ENCODE measurements at regions of chr10 and their contacts with region 1.

Region 1: DNA sequence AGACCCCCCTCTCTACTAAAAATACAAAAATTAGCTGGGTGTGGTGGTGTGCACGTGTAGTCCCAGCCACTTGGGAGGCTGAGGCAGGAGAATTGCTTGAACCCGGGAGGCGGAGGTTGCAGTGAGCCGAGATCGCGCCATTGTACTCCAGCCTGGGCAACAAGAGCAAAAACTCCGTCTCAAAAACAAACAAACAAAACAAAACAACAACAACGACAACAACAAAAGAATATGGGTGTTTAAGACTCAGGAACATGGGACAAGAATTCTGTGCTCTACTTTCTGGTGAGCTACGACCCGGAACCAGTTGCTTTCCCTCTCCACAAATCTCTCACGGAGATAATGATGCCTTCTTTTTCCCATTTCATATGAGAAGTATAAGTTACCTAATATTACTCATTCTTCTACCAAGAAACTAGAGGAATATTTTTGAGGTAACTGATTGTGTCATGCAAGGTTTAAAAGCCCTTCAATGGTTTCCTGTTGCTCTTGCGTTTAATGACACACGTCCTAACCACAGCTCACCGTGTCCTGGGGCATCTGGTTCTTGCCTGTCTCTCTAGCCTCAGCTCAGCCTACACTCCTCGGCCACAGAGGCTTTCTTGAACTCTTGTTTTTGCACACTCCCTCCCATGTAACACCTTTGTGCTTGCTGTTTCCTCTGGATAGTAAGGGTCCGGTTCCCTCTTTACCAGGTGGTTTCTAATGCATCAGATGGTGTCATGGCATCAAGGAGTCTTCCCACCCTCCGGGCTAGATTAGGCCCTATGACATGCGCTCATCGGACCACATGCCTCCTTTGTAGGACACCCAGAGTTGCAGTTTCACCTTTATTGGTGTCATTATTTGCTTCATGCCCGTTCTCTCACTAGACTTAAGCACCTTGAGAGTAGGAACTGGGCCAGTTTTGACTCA is 67.5 kb downstream of the PFKFB3 start:
- DNase-seq: peak; percentile 73
- H3K4me3 Mint-ChIP-seq: peak overlapping the region; percentile 22
- H3K27ac Mint-ChIP-seq: peak overlapping the region; percentile 89
- H3K4me1 Mint-ChIP-seq: peaks cover 58% of the 10 kb centered on the region
- H3K27me3 Mint-ChIP-seq: no peaks in the 10 kb centered on the region

Region 2: DNA sequence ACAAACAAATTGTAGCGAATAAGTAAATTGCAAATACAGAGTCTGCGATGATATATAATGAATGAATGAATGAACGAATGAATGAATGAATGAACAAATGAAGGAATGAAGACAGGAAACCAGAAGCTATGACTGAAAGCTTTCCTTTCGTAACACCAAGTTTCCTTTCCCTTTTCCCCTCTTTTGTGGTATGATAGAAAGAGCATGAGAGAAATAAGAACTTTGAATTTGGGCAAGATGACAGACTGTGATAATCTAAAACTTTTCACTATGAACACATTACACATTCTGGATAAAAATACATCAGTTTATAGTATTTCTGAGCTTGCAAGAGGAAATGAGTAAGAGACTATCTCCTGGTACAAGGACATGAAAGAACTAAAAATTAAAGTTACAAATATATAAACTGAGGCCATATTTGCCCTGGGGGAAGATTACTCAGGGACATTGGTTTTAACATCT is 913.9 kb before region 1 on chr10:
- intact Hi-C with region 1: no loop called
- DNase-seq: no peak
- H3K4me3 Mint-ChIP-seq: no peak overlapping the region
- H3K27ac Mint-ChIP-seq: no peak overlapping the region
- H3K4me1 Mint-ChIP-seq: peaks cover 9% of the 10 kb centered on the region
- H3K27me3 Mint-ChIP-seq: peaks cover 4% of the 10 kb centered on the region

Region 3: DNA sequence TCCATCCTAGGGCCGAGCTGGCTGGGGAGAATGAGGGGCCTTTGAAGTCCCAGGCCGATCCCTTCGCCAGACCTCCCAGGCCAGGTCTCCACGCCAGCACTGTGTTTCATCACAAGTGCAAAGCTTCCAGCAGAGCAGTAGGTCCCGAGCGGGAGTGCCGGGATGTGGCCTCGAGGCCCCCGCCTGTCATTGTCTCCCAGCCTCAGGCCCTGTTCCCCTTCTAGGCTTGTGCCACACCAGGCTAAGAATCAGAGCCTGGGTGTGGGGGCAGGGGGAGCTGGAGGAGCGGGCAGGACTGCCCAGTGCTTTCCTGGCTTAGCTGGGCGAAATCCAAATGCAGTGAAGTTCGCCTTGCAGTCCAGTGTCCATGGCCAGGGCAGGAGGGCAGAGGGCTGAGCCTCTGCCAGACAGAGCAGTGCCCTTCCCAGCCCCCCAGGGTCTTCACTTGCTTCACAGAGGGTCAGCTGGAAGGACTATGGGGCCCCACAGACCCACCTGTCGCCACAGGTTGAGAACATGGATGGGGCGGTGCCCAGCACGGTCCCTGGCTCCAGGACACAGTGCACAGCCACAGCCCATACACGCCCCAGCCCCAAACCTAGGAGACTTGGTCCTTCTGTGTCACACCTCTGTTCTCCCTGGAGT is 87.6 kb before region 1 on chr10:
- intact Hi-C with region 1: no loop called
- DNase-seq: no peak
- H3K4me3 Mint-ChIP-seq: no peak overlapping the region
- H3K27ac Mint-ChIP-seq: no peak overlapping the region
- H3K4me1 Mint-ChIP-seq: peaks cover 22% of the 10 kb centered on the region
- H3K27me3 Mint-ChIP-seq: no peaks in the 10 kb centered on the region

Region 4: DNA sequence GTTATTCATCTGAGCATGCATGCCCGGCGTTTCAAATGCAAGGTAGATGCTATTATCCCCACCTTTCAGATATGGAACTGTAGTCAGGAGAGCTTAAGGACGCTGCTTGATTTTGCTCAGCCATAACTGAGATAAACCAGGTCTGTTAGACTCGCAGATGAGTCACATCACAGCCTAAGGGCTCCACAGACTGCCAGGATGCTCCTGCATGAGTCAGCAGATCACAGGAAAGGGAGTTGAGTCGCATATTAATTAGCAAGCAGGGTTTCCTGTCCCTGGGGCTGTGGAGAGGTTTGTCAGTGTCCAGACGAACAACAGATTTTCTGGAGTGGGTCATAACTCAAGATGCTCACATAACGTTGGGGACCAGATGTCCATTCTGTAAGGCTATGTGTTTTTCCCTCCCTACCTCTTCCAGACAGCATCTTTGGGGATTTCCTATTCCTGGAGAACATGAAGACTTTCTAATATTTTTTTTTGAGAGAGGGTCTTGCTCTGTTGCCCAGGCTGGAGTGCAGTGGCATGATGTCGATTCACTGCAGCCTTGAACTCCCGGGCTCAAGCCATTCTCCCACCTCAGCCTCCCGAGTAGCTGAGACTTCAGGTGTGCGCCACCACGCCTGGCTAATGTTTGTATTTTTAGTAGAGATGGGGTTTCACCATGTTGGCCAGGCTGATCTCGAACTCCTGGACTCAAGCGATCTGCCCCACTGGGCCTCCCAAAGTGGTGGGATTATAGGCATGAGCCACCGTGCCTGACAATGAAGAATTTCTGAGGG is 30.8 kb before region 1 on chr10:
- intact Hi-C with region 1: loop called (anchors 1 kb)
- DNase-seq: peak; percentile 65
- H3K4me3 Mint-ChIP-seq: no peak overlapping the region
- H3K27ac Mint-ChIP-seq: peak overlapping the region; percentile 43
- H3K4me1 Mint-ChIP-seq: peaks cover 26% of the 10 kb centered on the region
- H3K27me3 Mint-ChIP-seq: no peaks in the 10 kb centered on the region

Region 5: GRCh38 chr10:6300106-6300783 is 30.0 kb after region 1 on chr10:
- intact Hi-C with region 1: loop called (anchors 1 kb)
- DNase-seq: peak; percentile 15
- H3K4me3 Mint-ChIP-seq: peak overlapping the region; percentile 69
- H3K27ac Mint-ChIP-seq: peak overlapping the region; percentile 88
- H3K4me1 Mint-ChIP-seq: peaks cover 57% of the 10 kb centered on the region
- H3K27me3 Mint-ChIP-seq: no peaks in the 10 kb centered on the region

Region 6: DNA sequence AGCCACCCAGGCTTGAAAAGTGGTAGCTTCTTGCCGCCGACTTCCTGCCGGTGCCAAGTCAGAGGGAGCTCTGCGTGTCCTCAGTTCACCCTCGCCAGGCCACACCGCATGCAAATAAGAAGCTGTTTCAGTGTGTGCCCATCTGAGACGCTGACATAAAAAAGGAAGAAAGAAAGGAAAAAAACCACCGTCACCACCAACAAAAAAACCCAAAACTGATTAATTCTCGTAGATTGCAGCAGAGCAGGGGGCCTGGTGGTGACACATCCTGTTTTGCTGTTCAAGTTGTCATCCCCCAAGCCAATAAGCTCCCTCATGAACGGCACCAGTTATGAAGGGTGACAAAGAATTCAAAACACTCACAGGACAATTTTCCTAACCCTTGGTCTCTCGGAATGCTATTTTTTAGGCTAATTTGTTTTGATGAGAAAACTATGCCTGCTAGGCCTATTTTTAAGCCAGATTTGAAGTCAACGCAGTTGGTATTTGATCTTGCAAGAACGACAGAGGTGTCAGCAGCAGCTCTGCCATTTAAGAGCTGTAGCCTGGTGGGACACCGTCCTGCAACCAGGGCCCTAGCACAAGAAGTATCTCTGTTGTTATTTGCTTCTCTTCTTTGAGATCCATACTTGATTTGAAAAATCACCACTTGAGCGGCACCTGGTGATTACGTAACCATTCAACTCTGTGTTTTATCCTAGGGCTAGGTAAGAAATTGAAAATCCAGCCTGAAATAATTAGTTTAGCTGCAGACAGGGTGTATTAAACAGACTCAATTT is 78.1 kb after region 1 on chr10:
- intact Hi-C with region 1: loop called (anchors 1 kb)
- DNase-seq: peak; percentile 67
- H3K4me3 Mint-ChIP-seq: peak overlapping the region; percentile 78
- H3K27ac Mint-ChIP-seq: peak overlapping the region; percentile 96
- H3K4me1 Mint-ChIP-seq: peaks cover 54% of the 10 kb centered on the region
- H3K27me3 Mint-ChIP-seq: no peaks in the 10 kb centered on the region

Region 7: GRCh38 chr10:6401562-6402348 is 131.5 kb after region 1 on chr10:
- intact Hi-C with region 1: loop called (anchors 1 kb)
- DNase-seq: peak; percentile 47
- H3K4me3 Mint-ChIP-seq: no peak overlapping the region
- H3K27ac Mint-ChIP-seq: no peak overlapping the region
- H3K4me1 Mint-ChIP-seq: peaks cover 37% of the 10 kb centered on the region
- H3K27me3 Mint-ChIP-seq: peaks cover 11% of the 10 kb centered on the region